Head of caudate nucleus (tissue), 42 donors: ENCODE measurements at regions of chr1 and their contacts with region 1.

Region 1: GRCh38 chr1:210571356-210572284 is 242.9 kb downstream of the HHAT start:
- DNase-seq: no peak

Region 2: DNA sequence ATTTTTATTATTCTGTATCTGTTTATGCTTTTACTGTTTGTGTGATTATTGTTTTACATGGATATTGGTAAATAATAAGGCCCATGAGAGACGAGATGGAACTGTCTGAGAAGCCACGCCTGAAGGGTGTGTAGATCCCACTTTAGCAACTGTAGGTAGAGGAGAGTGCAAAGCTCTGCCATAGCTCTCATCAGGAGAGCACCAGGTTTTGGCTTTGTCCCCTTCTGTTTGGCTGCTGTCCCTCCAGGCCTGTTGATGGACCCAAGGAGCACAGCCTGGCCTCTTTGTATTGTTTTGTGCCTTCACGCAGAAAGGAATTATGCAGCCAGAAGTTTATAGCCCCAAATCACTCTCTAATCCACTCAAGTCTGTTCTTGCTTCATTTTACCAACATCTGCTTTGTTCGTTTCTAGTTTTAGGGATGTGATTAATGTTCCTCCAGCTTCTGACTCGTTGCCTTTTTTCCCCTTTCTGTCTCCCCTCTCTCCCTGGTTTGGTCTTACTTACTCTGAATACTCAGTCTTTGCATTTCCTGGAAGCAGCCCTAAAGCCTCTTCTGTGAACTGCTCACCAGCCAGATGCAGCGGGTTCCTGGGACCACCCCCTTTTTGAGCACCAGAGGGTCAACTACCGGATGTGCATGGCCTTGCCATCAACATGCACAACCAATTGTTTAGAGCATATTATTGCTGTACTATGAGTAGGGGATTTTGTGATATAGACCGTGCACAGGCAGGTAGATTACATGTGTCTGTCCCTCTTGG is 115.6 kb before region 1 on chr1:
- intact Hi-C with region 1: loop called (anchors 10 kb)
- DNase-seq: no peak